Ascending aorta (tissue), 2 donors: ENCODE measurements at regions of chr12 and their contacts with region 1.

Region 1: DNA sequence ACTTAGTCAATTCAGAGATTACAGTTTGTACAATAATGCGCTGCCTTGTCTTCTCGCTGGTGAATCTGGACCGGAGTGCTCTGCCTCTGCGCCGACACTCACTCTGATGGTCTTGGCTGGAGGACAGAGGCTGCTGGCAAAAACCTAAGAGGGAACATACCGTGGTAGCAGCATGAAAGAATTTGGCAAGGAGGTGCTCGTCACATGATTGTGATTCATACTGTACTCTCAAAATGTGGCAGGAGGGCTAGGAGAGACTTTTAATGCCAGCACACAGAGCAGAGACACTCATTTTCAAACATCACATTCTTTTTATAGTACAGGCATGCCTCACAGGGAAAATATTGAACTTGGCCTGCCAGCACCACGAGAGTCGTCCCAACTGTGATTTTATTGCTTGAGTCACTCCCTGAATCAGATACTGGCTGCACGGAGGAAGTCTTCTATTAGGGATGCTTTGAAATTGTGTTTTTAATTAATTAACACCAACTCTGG is 67.8 kb downstream of the HMGA2 start:
- DNase-seq: peak; percentile 55 to 95
- H3K4me3 ChIP-seq: no peak overlapping the region
- H3K27ac ChIP-seq: peak overlapping the region in 1 of 2 donors; percentile 21
- H3K4me1 ChIP-seq: peaks cover 2 to 17% of the 10 kb centered on the region in 2 donors
- H3K27me3 ChIP-seq: peaks cover 3% of the 10 kb centered on the region
- CTCF ChIP-seq: no peak

Region 2: DNA sequence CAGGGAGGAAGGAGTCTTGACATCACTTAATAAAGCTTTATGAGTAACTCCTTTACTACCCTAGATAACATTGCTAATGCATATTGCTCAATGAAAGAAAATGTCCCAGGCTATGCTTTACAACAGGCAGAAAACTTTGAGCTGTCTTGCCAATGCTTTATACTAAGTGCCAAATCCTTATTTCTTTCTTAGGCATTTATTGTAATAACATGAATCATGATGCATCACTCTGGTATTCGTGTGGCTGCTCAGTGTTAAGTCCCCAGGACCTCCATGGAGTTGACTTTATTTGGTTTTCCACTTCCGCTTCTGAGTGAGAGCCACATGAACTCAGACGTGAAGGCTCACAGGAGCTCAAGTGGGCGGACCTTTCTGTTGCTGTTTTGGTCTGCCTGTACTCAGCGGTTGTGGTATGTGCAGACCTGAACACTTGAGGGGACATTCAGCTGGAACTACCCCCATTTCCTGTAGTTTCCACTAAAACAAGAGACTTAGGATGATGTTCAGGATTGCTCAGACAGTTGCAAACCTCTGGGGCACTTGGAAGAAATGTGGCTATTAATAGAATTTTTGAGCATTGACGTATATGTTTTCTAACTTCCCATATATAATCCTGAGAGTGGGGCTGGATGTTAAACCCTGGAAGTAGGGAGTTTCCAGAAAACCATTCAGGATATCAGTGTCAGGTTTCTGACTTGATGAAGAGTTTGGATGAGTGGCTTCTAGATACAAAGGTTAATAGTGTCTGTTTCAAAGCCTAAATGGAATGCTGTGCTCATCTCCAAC is 355.0 kb before region 1 on chr12:
- intact Hi-C with region 1: loop called (anchors 5 kb)
- DNase-seq: peak; percentile 51 to 92
- H3K4me3 ChIP-seq: no peak overlapping the region
- H3K27ac ChIP-seq: peak overlapping the region; percentile 71 to 81
- H3K4me1 ChIP-seq: peaks cover 3 to 10% of the 10 kb centered on the region in 2 donors
- H3K27me3 ChIP-seq: no peaks in the 10 kb centered on the region
- CTCF ChIP-seq: no peak

Region 3: DNA sequence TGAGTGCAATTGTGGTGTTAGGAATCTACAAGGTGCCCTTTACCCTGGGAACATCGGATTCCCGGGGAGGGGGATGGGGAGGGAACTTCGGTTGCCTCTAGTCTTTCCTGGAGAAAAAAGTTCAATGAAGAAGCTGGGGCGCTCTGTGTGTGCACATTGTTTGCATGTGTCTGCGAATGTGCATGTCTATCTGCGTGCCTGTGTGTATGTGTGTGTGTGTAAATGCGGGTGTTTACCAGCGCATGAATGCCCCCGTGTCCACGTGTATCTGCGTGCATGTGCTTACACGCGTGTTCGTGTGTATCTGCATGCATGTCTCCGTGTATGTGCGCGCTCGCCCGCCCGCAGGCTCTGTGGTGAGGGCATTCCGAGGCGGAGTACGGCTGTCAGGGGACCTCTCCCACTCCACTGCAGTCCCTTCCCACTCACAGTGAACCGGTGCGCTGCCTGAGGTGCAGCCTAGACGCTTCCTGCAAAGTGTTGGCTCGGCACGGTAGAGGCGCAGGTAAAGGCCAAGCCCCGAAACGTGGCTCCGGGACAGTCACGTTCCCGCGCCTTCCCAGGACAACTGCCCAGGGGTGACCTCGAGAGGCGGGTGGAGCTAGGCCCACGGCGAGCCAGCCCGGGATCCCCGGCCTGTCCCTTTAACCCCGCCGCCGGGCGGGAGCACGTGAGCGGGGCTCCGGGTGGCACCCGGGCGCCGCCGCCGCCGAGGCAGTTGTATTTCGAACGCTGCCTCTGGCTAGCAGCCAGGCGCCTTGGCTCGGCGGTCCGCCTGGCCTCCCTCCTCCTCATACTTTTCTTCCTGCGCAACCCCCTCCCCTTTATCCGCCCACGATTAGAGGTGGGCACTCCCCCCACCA is 68.3 kb before region 1 on chr12:
- intact Hi-C with region 1: loop called (anchors 5 kb)
- DNase-seq: peak in 1 of 2 donors; percentile 67
- H3K4me3 ChIP-seq: peak overlapping the region; percentile 64 to 82
- H3K27ac ChIP-seq: no peak overlapping the region
- H3K4me1 ChIP-seq: peaks cover 6 to 15% of the 10 kb centered on the region in 2 donors
- H3K27me3 ChIP-seq: no peaks in the 10 kb centered on the region
- CTCF ChIP-seq: no peak

Region 4: DNA sequence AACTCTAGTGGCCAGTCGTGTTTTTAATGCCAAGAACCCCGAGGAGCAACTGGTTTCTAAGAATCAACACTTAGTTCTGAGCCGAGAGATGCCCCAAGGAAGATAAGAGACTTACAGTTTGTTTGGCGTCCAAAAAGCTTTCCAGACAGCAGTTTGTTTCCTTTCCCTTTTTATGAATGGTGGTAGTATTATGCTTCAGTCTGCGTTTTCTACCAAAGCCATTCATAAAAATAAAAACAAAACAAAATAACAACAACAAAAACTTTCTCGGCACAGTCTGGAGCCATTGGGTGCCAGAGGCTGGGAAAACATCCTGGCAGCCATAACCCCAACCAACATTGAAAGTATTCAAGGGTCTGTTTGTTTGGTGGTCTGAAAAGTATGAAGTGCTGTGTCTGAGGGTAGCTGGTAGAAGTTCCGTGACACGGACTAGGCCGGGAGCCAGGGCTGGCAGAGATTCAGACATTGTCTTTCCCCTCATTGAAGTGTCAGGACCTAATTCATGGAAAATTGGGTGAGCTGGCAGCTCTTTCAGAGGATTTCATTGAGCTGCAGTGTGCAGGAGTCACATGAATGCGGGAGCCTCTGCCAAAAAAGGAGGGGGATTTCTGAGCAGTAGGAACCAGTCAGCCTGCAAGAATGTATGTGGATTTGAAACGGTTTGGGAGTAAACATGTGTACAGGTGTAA is 56.4 kb after region 1 on chr12:
- intact Hi-C with region 1: loop called (anchors 5 kb)
- DNase-seq: peak in 1 of 2 donors; percentile 67
- H3K4me3 ChIP-seq: no peak overlapping the region
- H3K27ac ChIP-seq: no peak overlapping the region
- H3K4me1 ChIP-seq: peaks cover 0 to 3% of the 10 kb centered on the region in 2 donors
- H3K27me3 ChIP-seq: no peaks in the 10 kb centered on the region
- CTCF ChIP-seq: no peak

Region 5: GRCh38 chr12:66301944-66302826 is 410.2 kb after region 1 on chr12 and contains the start of gene HELB:
- intact Hi-C with region 1: loop called (anchors 1 kb)
- DNase-seq: peak; percentile 93 to 99
- H3K4me3 ChIP-seq: peak within 1 kb of the TSS; percentile 79 to 82
- H3K27ac ChIP-seq: peak within 1 kb of the TSS; percentile 67 to 71
- H3K4me1 ChIP-seq: peaks cover 0 to 4% of the 10 kb centered on the region in 2 donors
- H3K27me3 ChIP-seq: no peaks in the 10 kb centered on the region
- CTCF ChIP-seq: no peak
- total RNA-seq, gene HELB: 3.1 TPM